PC-9 (cell line): ENCODE measurements at regions of chr15 and their contacts with region 1.

Region 1: GRCh38 chr15:58440158-58440910 is 8.5 kb downstream of the LIPC start:
- DNase-seq: peak; percentile 43 to 94
- H3K4me3 ChIP-seq: peak overlapping the region; percentile 41; the same call in 1 of the 2 replicates
- H3K27ac ChIP-seq: peak overlapping the region; percentile 100
- H3K4me1 ChIP-seq: peaks cover 65% of the 10 kb centered on the region
- H3K27me3 ChIP-seq: no peaks in the 10 kb centered on the region
- CTCF ChIP-seq: no peak

Region 2: GRCh38 chr15:58260911-58261267 is 179.4 kb before region 1 on chr15:
- CTCF ChIA-PET with region 1: no interaction called
- POLR2A ChIA-PET with region 1: no interaction called
- intact Hi-C with region 1: loop called (anchors 2 kb)
- DNase-seq: peak; percentile 48 to 83
- H3K4me3 ChIP-seq: 0 out of 2 replicates have a peak overlapping the region, but pooled peaks have one; percentile 27
- H3K27ac ChIP-seq: peak overlapping the region; percentile 98
- H3K4me1 ChIP-seq: peaks cover 46% of the 10 kb centered on the region
- H3K27me3 ChIP-seq: no peaks in the 10 kb centered on the region
- CTCF ChIP-seq: no peak

Region 3: GRCh38 chr15:58269455-58270414 is 170.6 kb before region 1 on chr15:
- CTCF ChIA-PET with region 1: interaction called, 5 read pairs
- POLR2A ChIA-PET with region 1: interaction called, 4 read pairs
- intact Hi-C with region 1: loop called (anchors 1 kb)
- DNase-seq: peak; percentile 44 to 62
- H3K4me3 ChIP-seq: no peak overlapping the region
- H3K27ac ChIP-seq: peak overlapping the region; percentile 39
- H3K4me1 ChIP-seq: peaks cover 34% of the 10 kb centered on the region
- H3K27me3 ChIP-seq: no peaks in the 10 kb centered on the region
- CTCF ChIP-seq: peak; percentile 74

Region 4: GRCh38 chr15:58346389-58346788 is 93.9 kb before region 1 on chr15:
- CTCF ChIA-PET with region 1: no interaction called
- POLR2A ChIA-PET with region 1: interaction called, 8 read pairs
- intact Hi-C with region 1: loop called (anchors 1 kb)
- DNase-seq: peak; percentile 84 to 91
- H3K4me3 ChIP-seq: no peak overlapping the region
- H3K27ac ChIP-seq: peak overlapping the region; percentile 51
- H3K4me1 ChIP-seq: peaks cover 23% of the 10 kb centered on the region
- H3K27me3 ChIP-seq: no peaks in the 10 kb centered on the region
- CTCF ChIP-seq: no peak

Region 5: DNA sequence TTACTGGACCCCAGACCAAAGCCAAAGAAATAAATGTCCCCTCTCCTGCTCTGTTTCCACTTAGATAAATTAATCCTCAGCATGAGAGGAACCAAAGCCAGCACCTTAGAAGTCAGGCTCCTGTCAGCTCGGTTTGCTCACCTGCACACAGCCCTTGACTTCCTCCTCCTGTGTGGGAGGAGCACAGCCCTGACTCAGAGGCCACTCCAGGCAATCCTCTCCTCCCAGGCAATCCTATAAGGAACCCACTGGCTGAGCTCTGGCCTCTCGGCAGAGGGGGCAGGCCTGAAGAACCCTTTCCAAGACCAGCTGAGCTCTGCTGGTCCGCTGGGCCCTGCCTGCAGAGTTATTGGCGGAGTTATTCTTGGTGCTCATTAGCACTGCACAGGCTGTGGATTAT is 22.2 kb after region 1 on chr15:
- CTCF ChIA-PET with region 1: no interaction called
- POLR2A ChIA-PET with region 1: interaction called, 12 read pairs
- intact Hi-C with region 1: no loop called
- DNase-seq: peak; percentile 75 to 79
- H3K4me3 ChIP-seq: no peak overlapping the region
- H3K27ac ChIP-seq: peak overlapping the region; percentile 47
- H3K4me1 ChIP-seq: peaks cover 43% of the 10 kb centered on the region
- H3K27me3 ChIP-seq: no peaks in the 10 kb centered on the region
- CTCF ChIP-seq: no peak

Region 6: DNA sequence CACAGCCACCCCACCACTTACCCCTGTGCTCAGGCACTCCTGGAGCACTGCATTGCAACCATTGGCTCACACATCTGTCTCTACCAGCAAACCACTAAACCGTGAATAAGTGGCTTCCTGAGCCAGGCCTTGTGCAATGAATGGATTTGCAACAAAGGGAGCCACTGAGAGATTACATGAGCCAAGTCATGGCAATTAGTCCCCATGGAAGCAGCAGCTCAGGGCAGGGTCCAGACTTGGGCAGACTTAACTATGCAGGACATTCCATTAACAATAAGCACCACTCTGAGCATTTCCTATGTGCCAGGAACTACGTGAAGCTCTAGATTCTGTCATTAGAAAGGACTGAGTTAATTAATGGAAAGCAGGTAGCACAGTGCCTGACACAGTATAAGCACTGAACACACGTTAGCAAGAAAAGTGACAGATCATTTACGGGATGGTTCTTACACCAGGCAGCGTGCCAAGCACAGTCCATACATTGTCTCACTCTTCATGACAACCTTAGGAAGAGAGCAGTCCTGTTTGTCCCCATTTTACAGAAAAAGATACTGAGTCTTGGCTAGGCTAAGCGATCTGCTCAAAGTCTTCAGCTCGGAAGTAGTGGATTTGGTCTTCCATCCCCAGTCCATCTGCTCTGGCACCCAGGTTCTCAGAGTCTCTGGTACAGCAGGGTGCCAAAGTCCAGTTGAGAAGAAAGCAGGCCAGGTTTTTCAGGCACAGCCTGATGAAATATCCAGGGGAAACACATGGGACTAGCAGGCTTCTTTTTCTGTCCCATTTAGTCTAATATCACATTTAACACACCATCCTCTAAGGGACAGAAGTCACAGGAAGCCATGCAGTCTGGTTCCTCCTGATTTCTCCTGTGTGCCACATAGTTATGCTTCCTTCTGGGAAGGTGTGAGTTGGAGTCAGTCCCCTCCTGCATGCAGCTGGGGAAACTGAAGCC is 35.5 kb after region 1 on chr15:
- CTCF ChIA-PET with region 1: no interaction called
- POLR2A ChIA-PET with region 1: interaction called, 10 read pairs
- intact Hi-C with region 1: no loop called
- DNase-seq: peak; percentile 8 to 52
- H3K4me3 ChIP-seq: no peak overlapping the region
- H3K27ac ChIP-seq: no peak overlapping the region
- H3K4me1 ChIP-seq: peaks cover 44% of the 10 kb centered on the region
- H3K27me3 ChIP-seq: no peaks in the 10 kb centered on the region
- CTCF ChIP-seq: no peak

Region 7: DNA sequence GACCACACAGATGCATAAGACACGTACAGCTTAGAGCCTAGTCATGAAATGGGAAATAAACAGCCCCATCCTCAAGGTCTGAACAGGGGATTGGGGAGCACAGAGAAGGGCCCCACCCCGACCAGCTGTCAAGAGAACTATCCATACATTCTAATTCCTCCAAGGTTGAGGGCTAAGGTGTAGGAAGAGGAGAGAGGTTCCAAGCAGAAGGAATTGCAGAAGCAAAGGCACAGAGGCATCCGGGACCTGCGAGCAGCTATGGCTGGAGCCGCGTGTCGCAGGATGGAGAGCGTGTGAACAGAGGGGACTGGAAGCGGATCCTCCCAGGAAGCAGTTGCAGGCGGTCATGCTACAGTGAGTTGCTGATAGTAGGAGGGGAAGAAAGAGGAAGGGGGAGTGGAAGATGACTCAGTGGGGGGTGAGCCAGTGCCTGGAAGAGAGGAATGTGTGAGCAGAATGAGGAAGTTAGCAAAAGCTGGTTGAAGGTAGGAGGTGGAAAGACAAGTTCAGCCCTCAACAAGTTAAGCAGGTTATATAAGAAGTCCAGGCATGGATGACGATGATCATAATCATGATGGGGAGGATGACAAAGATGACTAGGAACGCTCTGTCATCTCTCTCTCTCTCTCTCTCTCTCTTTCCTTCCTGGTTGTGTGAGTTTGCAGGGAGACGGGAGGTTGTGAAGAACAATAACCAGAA is 81.1 kb after region 1 on chr15:
- CTCF ChIA-PET with region 1: no interaction called
- POLR2A ChIA-PET with region 1: no interaction called
- intact Hi-C with region 1: loop called (anchors 1 kb)
- DNase-seq: peak; percentile 89 to 98
- H3K4me3 ChIP-seq: peak overlapping the region; percentile 49; the same call in 1 of the 2 replicates
- H3K27ac ChIP-seq: peak overlapping the region; percentile 97
- H3K4me1 ChIP-seq: peaks cover 50% of the 10 kb centered on the region
- H3K27me3 ChIP-seq: no peaks in the 10 kb centered on the region
- CTCF ChIP-seq: no peak